Activated CD8-positive, alpha-beta memory T cell treated with anti-CD3 and anti-CD28 coated beads, Interleukin-2, amount 10 ng/mL, durations not matched to agents 7 days and 5 days (primary cell): ENCODE measurements at regions of chr5 and their contacts with region 1.

Region 1: GRCh38 chr5:142108432-142109330 is at the start of gene NDFIP1:
- DNase-seq: peak; percentile 88
- ATAC-seq: peak; percentile 95
- H3K4me3 Mint-ChIP-seq: peak within 1 kb of the TSS; percentile 87
- H3K27ac Mint-ChIP-seq: peak within 1 kb of the TSS; percentile 89
- H3K4me1 Mint-ChIP-seq: peaks cover 44% of the 10 kb centered on the region
- H3K27me3 Mint-ChIP-seq: no peaks in the 10 kb centered on the region
- total RNA-seq, gene NDFIP1: 28.5 to 31.7 TPM

Region 2: DNA sequence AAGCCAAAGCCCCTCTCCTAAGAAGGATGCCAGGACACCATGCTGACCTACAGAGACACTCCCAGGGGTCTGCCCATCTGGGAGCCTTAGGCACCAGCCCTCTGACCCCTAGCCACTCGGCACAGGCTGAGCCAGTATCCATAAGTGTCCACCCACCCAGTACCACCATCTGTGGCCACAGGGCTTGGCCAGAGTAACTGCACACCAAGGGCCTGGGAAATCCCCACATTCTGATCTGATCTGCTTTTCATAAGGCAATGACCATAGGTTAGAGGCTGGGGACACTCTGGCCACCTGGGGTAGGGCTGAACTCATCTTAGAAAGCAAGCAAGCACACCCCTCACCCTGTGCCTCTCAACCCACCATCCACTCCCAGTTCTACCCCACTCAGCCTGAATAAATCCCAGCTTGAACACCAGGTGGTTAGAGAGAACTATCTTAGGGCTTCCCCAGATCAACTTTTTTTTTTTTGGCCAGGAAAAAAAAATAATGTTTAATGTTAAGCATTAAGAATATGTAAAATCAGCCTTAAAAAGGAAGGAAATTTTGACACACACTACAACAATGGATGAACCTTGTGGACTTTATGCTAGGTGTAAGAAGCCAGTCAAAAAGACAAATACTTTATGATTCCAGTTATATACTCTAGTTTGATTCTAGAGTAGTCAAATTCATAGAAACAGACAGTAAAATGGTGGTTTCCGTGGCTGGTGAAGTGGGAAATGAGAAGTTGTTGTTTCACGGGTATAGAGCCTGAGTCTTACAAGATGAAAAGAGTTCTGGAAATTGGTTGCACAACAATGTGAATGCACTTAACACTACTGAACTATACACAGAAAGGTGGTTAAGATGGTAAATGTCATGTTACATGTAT is 102.1 kb before region 1 on chr5:
- CTCF ChIA-PET with region 1: interaction called, 42 read pairs
- DNase-seq: peak; percentile 77
- ATAC-seq: peak; percentile 85
- H3K4me3 Mint-ChIP-seq: peak overlapping the region; percentile 6
- H3K27ac Mint-ChIP-seq: peak overlapping the region; percentile 72
- H3K4me1 Mint-ChIP-seq: peaks cover 31% of the 10 kb centered on the region
- H3K27me3 Mint-ChIP-seq: peaks cover 14% of the 10 kb centered on the region